ENCODE measurements at regions of chr9 and their contacts with region 1.

Region 1: DNA sequence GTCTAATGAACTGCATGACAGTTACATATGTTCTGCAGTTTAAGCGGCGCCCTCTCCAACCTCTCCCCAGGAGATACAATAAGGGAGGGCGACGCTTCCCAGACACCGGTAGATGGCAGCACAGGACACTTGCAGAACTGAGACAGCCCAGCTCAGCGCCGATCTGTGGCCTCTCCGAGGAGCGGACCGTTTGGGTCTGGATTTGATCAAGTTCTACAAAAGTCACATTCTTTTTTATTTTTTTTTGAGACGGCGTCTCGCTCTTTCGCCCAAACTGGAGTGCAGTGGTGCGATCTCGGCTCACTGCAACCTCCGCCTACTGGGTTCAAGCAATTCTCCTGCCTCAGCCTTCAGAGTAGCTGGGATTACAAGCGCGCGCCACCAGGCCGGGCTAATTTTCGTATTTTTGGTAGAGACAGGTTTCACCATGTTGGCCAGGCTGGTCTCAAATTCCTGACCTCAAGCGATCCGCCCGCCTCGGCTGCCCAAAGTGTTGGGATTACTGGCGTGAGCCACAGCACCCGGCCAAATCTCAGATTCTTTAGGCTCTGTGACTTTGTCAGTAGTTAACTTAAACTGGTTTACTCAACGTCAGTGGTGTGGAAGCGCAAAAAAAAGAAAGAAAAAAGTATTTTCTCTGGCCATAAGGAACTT is 1.4 kb upstream of the ATOSB start:
- DNase-seq: peak; percentile 81
- H3K4me3 Mint-ChIP-seq: peak overlapping the region; percentile 91
- H3K27ac Mint-ChIP-seq: peak overlapping the region; percentile 89
- H3K4me1 Mint-ChIP-seq: peaks cover 36% of the 10 kb centered on the region
- H3K27me3 Mint-ChIP-seq: peaks cover 8% of the 10 kb centered on the region

Region 2: GRCh38 chr9:34178520-34179212 is 938.4 kb before region 1 on chr9 and contains the start of gene UBAP1:
- intact Hi-C with region 1: loop called (anchors 5 kb)
- DNase-seq: peak; percentile 95
- H3K4me3 Mint-ChIP-seq: peak within 1 kb of the TSS; percentile 90
- H3K27ac Mint-ChIP-seq: peak within 1 kb of the TSS; percentile 94
- H3K4me1 Mint-ChIP-seq: peaks cover 11% of the 10 kb centered on the region
- H3K27me3 Mint-ChIP-seq: no peaks in the 10 kb centered on the region
- total RNA-seq, gene UBAP1: 33.6 and 33.7 TPM in 2 replicates

Region 3: GRCh38 chr9:35161713-35162604 is 44.9 kb after region 1 on chr9 and contains the start of gene UNC13B:
- intact Hi-C with region 1: loop called (anchors 5 kb)
- DNase-seq: peak; percentile 63
- H3K4me3 Mint-ChIP-seq: peak within 1 kb of the TSS; percentile 86
- H3K27ac Mint-ChIP-seq: no peak within 1 kb of the TSS
- H3K4me1 Mint-ChIP-seq: peaks cover 10% of the 10 kb centered on the region
- H3K27me3 Mint-ChIP-seq: peaks cover 22% of the 10 kb centered on the region
- total RNA-seq, gene UNC13B: 0.83 and 0.84 TPM in 2 replicates

Region 4: DNA sequence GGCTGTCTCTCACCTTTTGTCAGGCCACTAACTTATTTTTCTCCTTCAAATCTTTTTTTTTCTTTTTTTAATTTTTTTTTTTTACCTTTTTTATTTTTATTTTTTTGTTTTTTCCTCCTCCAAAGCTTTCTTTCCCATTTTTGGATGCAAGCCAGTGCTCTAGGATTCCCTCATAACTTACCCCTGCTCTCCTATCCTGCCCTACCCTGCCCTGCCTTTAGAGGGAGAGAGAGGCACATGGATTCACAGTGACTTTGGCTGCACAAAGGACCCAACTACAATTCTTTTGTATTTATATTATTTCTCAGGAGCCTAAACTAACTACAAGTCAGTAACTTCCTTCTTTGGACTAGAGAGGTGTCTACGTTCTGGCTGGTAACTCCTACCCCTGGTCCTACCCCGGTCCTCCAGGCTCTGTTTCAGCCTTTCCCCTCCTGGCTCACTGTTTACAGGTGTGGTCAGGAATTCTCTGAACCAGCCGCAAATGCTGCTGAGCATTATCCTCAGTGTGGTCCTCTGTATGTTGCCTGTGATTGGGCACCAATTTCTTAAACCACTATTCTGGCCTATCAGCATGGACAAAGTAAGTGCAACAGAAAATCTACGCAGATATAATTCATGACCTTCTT is 364.4 kb after region 1 on chr9:
- intact Hi-C with region 1: loop called (anchors 1 kb)
- DNase-seq: no peak
- H3K4me3 Mint-ChIP-seq: no peak overlapping the region
- H3K27ac Mint-ChIP-seq: no peak overlapping the region
- H3K4me1 Mint-ChIP-seq: no peaks in the 10 kb centered on the region
- H3K27me3 Mint-ChIP-seq: peaks cover 6% of the 10 kb centered on the region

Region 5: DNA sequence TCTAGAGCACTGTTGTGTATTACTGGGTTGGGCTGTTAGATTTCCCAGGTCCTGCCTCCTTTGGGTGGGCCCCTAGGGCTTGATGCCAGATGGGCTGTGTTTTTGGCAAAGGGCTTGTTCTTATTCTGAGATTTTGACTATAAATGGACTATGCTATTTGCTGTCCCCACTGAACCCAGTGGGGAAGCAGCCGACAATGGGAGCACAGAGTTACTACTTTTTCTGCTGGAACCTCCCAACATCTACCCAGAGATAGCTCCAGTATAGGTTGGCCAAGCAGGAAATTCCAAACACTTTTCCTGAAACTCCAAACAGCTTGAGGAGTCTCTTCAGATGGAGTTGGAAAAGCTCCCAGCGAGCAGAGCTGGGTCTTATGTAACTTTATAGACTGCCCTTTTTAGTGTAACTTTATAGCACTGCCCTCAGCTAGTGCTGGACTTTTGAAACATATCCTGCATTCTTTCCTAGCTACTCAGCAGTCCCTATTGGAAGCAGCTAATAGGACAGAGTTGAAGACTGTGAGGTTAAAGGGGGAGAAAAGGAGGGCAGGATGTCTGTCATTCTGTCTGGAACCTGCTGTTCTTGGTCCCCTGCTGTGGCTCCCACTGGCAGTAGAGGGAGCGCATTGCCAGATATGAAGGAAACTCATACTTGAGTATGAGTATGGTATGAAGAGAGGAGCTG is 393.9 kb after region 1 on chr9:
- intact Hi-C with region 1: no loop called
- DNase-seq: no peak
- H3K4me3 Mint-ChIP-seq: no peak overlapping the region
- H3K27ac Mint-ChIP-seq: no peak overlapping the region
- H3K4me1 Mint-ChIP-seq: no peaks in the 10 kb centered on the region
- H3K27me3 Mint-ChIP-seq: peaks cover 8% of the 10 kb centered on the region

Region 6: GRCh38 chr9:35603987-35604577 is 487.1 kb after region 1 on chr9:
- intact Hi-C with region 1: loop called (anchors 1 kb)
- DNase-seq: peak; percentile 99
- H3K4me3 Mint-ChIP-seq: peak overlapping the region; percentile 84
- H3K27ac Mint-ChIP-seq: peak overlapping the region; percentile 93
- H3K4me1 Mint-ChIP-seq: peaks cover 32% of the 10 kb centered on the region
- H3K27me3 Mint-ChIP-seq: no peaks in the 10 kb centered on the region